ENCODE measurements at regions of chr17 and their contacts with region 1.

Region 1: GRCh38 chr17:7989781-7990655 is 12.4 kb upstream of the GUCY2D start:
- DNase-seq: peak; percentile 79 to 98 (median 93)
- ATAC-seq: peak; percentile 91
- H3K4me3 ChIP-seq: peak overlapping the region; percentile 55
- H3K4me3 Mint-ChIP-seq: peak overlapping the region; percentile 82
- H3K27ac ChIP-seq: peak overlapping the region; percentile 24 to 78
- H3K27ac Mint-ChIP-seq: peak overlapping the region; percentile 83
- H3K4me1 ChIP-seq: peaks cover 18% of the 10 kb centered on the region
- H3K4me1 Mint-ChIP-seq: peaks cover 26% of the 10 kb centered on the region
- H3K27me3 ChIP-seq: no peaks in the 10 kb centered on the region
- H3K27me3 Mint-ChIP-seq: peaks cover 4% of the 10 kb centered on the region
- CTCF ChIP-seq: peak; percentile 94

Region 2: DNA sequence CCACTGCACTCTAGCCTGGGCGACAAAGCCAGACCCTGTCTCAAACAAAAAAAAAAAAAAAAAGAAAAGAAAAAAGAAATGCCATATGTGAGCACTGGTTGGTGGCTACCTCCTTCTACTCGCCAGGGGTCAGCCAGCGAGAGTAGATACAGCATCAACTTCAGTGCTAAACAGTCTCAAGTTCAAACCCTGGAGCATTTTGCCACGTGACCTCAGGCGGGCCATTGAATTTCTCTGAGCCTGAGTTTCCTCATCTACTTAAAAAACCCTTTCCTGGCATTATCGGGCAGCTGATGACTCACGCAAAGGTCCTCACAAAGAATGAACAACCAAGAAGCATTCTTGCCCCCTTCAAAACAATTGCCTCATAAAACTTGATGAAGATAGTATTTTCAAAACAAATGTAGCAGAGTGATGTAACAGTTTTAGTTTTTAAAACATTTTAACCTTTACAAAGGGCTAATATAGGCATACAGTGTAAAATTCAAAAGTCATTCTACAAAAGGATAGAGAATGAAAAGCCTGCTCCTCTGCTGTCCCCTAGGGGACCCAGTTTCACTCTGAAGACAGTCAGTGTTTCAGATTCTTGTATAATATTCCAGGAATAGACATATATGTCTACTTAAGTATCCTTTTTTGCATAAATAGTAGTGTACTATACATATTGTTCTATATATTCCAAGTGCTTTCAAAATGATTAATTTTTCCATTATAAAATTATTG is 244.1 kb before region 1 on chr17:
- CTCF ChIA-PET with region 1: interaction called, 26 read pairs
- POLR2A ChIA-PET with region 1: no interaction called
- intact Hi-C with region 1: loop called (anchors 1 to 2 kb)
- DNase-seq: peak in 1 of 14 experiments; percentile 17
- ATAC-seq: no peak
- H3K4me3 ChIP-seq: no peak overlapping the region
- H3K4me3 Mint-ChIP-seq: no peak overlapping the region
- H3K27ac ChIP-seq: no peak overlapping the region
- H3K27ac Mint-ChIP-seq: no peak overlapping the region
- H3K4me1 ChIP-seq: no peaks in the 10 kb centered on the region
- H3K4me1 Mint-ChIP-seq: no peaks in the 10 kb centered on the region
- H3K27me3 ChIP-seq: peaks cover 2 to 4% of the 10 kb centered on the region in 2 experiments
- H3K27me3 Mint-ChIP-seq: peaks cover 17% of the 10 kb centered on the region
- CTCF ChIP-seq: no peak

Region 3: GRCh38 chr17:7834962-7835813 is 154.8 kb before region 1 on chr17:
- CTCF ChIA-PET with region 1: interaction called, 4 read pairs
- POLR2A ChIA-PET with region 1: interaction called, 10 read pairs
- intact Hi-C with region 1: no loop called
- DNase-seq: peak; percentile 74 to 98 (median 86)
- ATAC-seq: peak; percentile 54
- H3K4me3 ChIP-seq: peak overlapping the region; percentile 82
- H3K4me3 Mint-ChIP-seq: peak overlapping the region; percentile 93
- H3K27ac ChIP-seq: peak overlapping the region; percentile 98 to 100
- H3K27ac Mint-ChIP-seq: peak overlapping the region; percentile 98
- H3K4me1 ChIP-seq: peaks cover 62% of the 10 kb centered on the region
- H3K4me1 Mint-ChIP-seq: peaks cover 42% of the 10 kb centered on the region
- H3K27me3 ChIP-seq: no peaks in the 10 kb centered on the region
- H3K27me3 Mint-ChIP-seq: peaks cover 4% of the 10 kb centered on the region
- CTCF ChIP-seq: peak; percentile 84

Region 4: DNA sequence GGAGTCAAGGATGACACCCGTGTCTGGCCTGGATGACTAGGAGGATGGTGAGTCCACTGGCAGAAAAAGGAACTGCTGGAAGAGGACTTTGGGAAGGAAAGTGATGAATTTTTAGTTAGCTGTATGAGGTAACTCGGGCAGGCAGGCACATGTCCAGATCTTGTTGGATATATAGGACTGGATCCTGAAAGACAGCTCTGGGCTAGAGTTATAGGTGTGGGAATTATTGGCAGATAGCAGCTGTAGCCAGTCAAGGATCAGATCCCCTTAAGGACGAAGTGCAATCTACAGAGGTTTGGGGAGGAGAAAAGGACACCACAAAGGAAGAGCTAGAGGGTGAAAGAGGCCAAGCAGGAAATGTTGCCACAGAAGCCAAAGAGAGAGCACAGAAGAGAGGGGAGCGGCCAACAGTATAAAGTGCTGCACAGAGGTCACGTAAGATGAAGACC is 122.1 kb before region 1 on chr17:
- CTCF ChIA-PET with region 1: interaction called, 48 read pairs
- POLR2A ChIA-PET with region 1: interaction called, 8 read pairs
- intact Hi-C with region 1: loop called in 1 of 2 experiments (anchors 1 kb)
- DNase-seq: peak in 3 of 14 experiments; percentile 38 to 49 (median 47)
- ATAC-seq: peak; percentile 78
- H3K4me3 ChIP-seq: peak overlapping the region; percentile 26
- H3K4me3 Mint-ChIP-seq: peak overlapping the region; percentile 9
- H3K27ac ChIP-seq: peak overlapping the region in 1 of 2 donors; percentile 52
- H3K27ac Mint-ChIP-seq: peak overlapping the region; percentile 62
- H3K4me1 ChIP-seq: peaks cover 20% of the 10 kb centered on the region
- H3K4me1 Mint-ChIP-seq: peaks cover 32% of the 10 kb centered on the region
- H3K27me3 ChIP-seq: no peaks in the 10 kb centered on the region
- H3K27me3 Mint-ChIP-seq: no peaks in the 10 kb centered on the region
- CTCF ChIP-seq: no peak